ENCODE measurements at regions of chr16 and their contacts with region 1.

Region 1: GRCh38 chr16:87778830-87779579 is 13.2 kb upstream of the KLHDC4 start:
- DNase-seq: peak; percentile 95
- H3K4me3 Mint-ChIP-seq: peak overlapping the region; percentile 48
- H3K27ac Mint-ChIP-seq: peak overlapping the region; percentile 95
- H3K4me1 Mint-ChIP-seq: peaks cover 56% of the 10 kb centered on the region
- H3K27me3 Mint-ChIP-seq: peaks cover 11% of the 10 kb centered on the region

Region 2: GRCh38 chr16:86424398-86425367 is 1354.3 kb before region 1 on chr16:
- CTCF ChIA-PET with region 1: no interaction called
- DNase-seq: no peak
- H3K4me3 Mint-ChIP-seq: no peak overlapping the region
- H3K27ac Mint-ChIP-seq: no peak overlapping the region
- H3K4me1 Mint-ChIP-seq: no peaks in the 10 kb centered on the region
- H3K27me3 Mint-ChIP-seq: no peaks in the 10 kb centered on the region

Region 3: DNA sequence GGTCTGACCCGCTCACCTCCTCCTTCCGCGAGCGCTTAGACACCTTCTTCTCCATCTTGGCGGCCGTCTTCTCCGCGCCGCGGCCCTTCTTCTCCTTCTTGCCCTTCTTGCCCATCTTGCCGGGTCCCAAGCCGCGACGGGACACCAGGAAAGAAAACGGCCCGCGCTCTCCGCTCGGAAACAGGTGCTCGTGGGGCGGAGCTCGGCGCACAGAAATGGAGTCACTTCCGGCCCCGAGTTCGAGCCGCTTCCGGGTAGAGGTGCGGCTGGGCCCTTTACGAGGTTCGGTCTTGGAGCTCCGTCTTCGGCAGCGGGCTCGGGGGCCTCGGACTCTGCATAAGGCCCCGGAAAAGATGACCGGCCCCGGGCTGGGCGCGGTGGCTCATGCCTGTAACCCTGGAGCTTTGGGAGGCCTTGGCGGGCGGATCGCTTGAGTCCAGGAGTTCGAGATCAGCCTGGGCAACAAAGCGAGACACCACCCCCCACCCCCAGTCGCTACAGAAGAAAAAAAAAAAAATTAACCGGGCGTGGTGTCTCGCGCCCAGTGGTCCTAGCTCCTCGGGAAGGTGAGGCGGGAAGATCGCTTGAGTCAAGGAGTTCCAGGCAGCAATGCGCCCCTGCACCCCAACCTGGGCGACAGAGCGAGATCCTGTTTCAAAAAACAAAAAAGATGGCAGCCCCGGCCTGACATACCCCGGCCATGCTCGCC is 13.1 kb before region 1 on chr16 and contains the start of gene KLHDC4:
- CTCF ChIA-PET with region 1: interaction called, 10 read pairs
- DNase-seq: peak; percentile 94
- H3K4me3 Mint-ChIP-seq: peak within 1 kb of the TSS; percentile 100
- H3K27ac Mint-ChIP-seq: peak within 1 kb of the TSS; percentile 100
- H3K4me1 Mint-ChIP-seq: peaks cover 53% of the 10 kb centered on the region
- H3K27me3 Mint-ChIP-seq: peaks cover 4% of the 10 kb centered on the region

Region 4: DNA sequence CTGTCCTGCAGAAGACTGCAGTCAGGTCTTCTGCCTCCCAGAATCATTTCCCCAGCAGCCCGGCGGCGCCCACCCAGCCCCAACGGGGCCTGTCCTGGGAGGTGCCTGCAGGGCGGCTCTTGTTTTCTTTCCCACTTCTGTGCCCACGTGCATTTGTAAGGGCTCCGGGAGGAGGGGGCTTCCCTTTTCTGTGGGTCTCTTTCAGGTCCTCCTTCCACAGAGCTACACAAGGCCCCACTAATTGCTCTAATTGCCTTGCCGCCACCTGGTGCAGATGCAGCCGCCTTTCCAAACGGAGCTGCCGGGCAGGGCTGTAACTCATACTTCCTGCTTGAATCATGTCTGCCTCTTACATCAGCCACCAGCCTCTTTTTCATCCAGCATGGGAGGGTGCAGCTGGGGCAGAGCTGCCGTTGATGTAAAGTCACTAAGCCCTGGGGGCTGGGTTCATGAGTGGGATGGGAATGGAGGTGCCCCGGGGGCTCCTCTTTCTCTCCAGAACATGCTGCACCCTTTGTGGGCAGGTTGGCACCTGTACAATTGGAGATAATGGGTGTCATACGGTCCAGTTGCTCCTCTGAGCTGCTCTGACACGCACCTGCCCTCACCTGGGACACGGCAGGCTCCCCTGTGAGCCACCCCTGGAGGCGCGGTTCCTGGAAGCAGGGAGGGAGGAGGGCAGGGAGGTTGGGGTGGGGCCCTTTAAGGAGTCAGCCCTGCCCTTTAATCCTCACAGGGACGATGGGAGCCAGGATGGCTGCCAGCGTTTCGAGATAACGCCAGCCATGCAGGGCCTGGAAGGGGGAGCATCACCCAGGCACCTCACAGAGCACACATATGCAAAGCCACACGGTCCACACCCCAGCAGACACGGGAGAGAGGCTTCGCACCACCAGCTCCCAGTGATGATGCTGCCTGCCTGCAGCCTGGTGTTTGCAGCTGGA is 27.9 kb after region 1 on chr16:
- CTCF ChIA-PET with region 1: interaction called, 36 read pairs
- DNase-seq: peak; percentile 74
- H3K4me3 Mint-ChIP-seq: peak overlapping the region; percentile 83
- H3K27ac Mint-ChIP-seq: peak overlapping the region; percentile 97
- H3K4me1 Mint-ChIP-seq: peaks cover 45% of the 10 kb centered on the region
- H3K27me3 Mint-ChIP-seq: peaks cover 45% of the 10 kb centered on the region

Region 5: GRCh38 chr16:87853411-87854052 is 74.5 kb after region 1 on chr16:
- CTCF ChIA-PET with region 1: interaction called, 80 read pairs
- DNase-seq: peak; percentile 95
- H3K4me3 Mint-ChIP-seq: peak overlapping the region; percentile 65
- H3K27ac Mint-ChIP-seq: peak overlapping the region; percentile 89
- H3K4me1 Mint-ChIP-seq: peaks cover 60% of the 10 kb centered on the region
- H3K27me3 Mint-ChIP-seq: no peaks in the 10 kb centered on the region

Region 6: DNA sequence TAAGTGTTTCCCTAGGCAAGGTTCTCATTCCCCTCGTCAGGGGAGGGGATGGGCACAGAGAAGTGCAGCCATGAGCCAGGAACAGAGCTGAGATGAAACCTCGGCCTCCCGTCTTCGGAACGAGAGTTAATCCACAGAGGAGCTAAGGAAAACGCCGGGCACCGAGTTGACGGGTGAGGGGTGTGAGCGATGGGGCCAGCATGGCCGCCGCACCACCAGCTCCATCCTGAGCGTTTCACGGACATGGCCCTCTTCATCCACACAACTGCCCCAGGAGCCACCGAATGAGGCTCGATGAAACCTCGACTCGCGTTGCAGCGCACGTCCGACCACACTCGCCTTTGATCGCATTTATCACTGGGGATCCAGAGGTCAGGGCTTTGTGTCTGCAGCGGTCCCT is 135.8 kb after region 1 on chr16:
- CTCF ChIA-PET with region 1: interaction called, 13 read pairs
- DNase-seq: no peak
- H3K4me3 Mint-ChIP-seq: no peak overlapping the region
- H3K27ac Mint-ChIP-seq: no peak overlapping the region
- H3K4me1 Mint-ChIP-seq: peaks cover 9% of the 10 kb centered on the region
- H3K27me3 Mint-ChIP-seq: peaks cover 39% of the 10 kb centered on the region